ENCODE measurements at regions of chr13 and their contacts with region 1.

Region 1: DNA sequence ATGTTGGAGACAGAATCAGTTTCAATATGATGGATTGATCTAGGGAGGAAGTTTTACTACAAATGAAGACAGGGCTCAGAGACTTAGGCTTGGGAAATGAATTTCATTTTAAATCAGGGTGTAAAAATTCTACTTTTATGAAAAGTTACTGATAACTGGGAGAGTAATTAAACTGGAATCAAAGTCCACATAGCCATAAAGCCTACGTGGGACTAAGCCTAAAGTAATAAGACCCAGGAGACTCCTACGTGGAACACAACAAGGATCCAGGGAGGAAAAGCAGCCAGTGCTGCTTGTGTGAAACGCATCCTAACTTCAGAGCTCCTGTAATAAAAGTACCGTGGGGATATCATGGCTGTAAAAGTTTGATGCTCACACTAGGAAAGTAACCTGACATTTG is 152.0 kb upstream of the MYO16 start:
- DNase-seq: no peak
- ATAC-seq: no peak
- H3K4me3 ChIP-seq: no peak overlapping the region
- H3K27ac ChIP-seq: no peak overlapping the region
- H3K4me1 ChIP-seq: no peaks in the 10 kb centered on the region
- H3K27me3 ChIP-seq: no peaks in the 10 kb centered on the region
- CTCF ChIP-seq: no peak

Region 2: DNA sequence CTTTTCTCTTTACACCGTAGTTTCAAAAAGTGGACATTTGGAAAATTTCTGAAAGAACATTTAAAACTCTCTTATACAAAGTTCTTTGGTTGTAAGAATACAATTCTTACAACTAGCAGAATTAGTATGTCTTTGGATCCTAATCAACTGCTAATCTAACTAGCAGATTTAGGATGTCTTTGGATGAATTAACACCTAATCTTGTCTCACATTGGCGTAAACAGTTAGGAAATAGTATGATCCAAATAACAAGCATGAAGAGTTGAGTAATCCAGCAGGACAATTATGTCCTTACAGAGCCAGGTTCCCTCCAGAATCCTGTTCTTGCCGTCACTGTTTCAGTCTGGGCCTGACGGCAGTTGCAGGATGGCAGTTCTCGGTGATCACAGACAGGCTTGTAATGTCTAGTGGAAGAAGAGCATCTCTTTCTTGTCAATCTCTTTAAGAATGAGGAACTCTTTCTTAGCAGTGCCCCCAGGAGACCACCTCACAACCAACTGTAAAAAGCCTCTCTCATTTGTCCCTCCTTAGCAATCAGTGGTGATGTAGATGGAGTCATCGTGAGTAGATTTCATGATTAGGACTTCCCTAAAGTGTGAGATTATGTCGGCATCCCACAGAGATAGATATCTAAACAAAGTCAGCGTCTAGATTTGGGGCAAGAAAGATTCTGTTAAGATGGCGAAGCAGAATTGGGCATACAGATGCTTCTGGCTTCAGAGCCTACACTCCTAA is 213.6 kb before region 1 on chr13:
- intact Hi-C with region 1: loop called in 1 of 2 experiments (anchors 5 kb)
- DNase-seq: no peak
- ATAC-seq: no peak
- H3K4me3 ChIP-seq: no peak overlapping the region
- H3K27ac ChIP-seq: no peak overlapping the region
- H3K4me1 ChIP-seq: no peaks in the 10 kb centered on the region
- H3K27me3 ChIP-seq: no peaks in the 10 kb centered on the region
- CTCF ChIP-seq: no peak

Region 3: DNA sequence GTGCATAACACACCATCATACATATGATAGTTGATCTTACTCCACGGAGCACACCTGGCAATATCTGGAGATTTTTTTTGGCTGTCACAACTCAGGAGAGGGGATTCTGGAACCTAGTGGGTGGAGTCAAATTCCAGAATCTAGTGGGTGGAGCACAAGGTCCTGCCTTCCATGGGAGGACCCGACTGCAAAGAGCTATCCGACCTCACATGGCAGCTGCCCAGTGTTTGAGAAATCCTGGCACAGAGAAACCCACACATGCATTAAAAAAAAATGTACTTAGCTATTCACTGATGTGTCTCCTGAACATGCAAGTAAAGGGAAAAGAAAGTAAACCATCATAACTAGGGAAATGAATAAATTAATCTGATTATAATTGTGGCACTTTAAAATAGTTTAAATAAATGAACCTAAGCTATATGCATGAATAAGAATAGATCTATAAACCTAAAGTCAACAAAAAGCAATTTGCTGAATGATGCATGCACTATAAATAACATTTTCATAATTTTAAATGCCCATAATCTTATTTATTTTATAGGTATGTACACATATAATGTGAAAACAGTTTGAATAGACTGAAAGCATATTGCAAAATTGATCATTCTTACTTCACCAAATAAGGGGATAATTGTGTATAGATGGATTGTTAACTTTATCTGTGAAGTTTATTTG is 452.3 kb after region 1 on chr13:
- intact Hi-C with region 1: no loop called
- DNase-seq: no peak
- ATAC-seq: no peak
- H3K4me3 ChIP-seq: no peak overlapping the region
- H3K27ac ChIP-seq: no peak overlapping the region
- H3K4me1 ChIP-seq: no peaks in the 10 kb centered on the region
- H3K27me3 ChIP-seq: peaks cover 0 to 3% (median 2%) of the 10 kb centered on the region in 3 donors
- CTCF ChIP-seq: no peak

Measured in psoas muscle (tissue), 8 donors.